CD8-positive, alpha-beta memory T cell (primary cell): ENCODE measurements at regions of chr1 and their contacts with region 1.

Region 1: DNA sequence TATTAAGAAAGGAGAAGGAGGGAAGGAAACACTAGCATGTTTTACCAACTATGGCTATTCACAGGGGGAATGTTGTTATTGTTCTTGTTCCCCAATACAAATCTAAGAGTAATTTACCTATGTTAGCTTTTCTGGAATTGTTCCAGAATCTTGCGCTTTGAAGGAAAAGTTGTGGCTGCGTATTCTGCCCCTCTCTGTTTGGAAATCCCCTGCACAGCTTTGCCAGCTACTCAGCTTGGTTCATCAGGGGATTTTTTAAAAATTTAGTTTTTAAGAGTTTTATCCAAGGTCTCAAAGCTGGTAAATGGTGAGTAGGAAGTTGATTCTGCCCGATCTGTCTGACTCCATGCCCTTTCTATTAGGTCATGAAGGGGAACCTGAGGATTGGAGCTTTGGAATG is 9.5 kb upstream of the IRF6 start:
- DNase-seq: no peak
- H3K4me3 ChIP-seq: no peak overlapping the region
- H3K4me3 Mint-ChIP-seq: no peak overlapping the region
- H3K27ac ChIP-seq: no peak overlapping the region
- H3K27ac Mint-ChIP-seq: no peak overlapping the region
- H3K4me1 ChIP-seq: no peaks in the 10 kb centered on the region
- H3K4me1 Mint-ChIP-seq: no peaks in the 10 kb centered on the region
- H3K27me3 ChIP-seq: no peaks in the 10 kb centered on the region
- H3K27me3 Mint-ChIP-seq: peaks cover 17 to 27% of the 10 kb centered on the region in 2 donors

Region 2: GRCh38 chr1:209827384-209828262 is 12.1 kb after region 1 on chr1 and contains the start of gene UTP25:
- CTCF ChIA-PET with region 1: interaction called, 21 read pairs
- POLR2A ChIA-PET with region 1: no interaction called
- DNase-seq: peak; percentile 83 to 94 (median 91)
- H3K4me3 ChIP-seq: peak within 1 kb of the TSS; percentile 99
- H3K4me3 Mint-ChIP-seq: peak within 1 kb of the TSS; percentile 90 to 97 (median 96)
- H3K27ac ChIP-seq: peak within 1 kb of the TSS; percentile 90
- H3K27ac Mint-ChIP-seq: peak within 1 kb of the TSS; percentile 74 to 98 (median 90)
- H3K4me1 ChIP-seq: peaks cover 29% of the 10 kb centered on the region
- H3K4me1 Mint-ChIP-seq: peaks cover 46 to 50% (median 47%) of the 10 kb centered on the region in 3 donors
- H3K27me3 ChIP-seq: no peaks in the 10 kb centered on the region
- H3K27me3 Mint-ChIP-seq: peaks cover 7 to 11% of the 10 kb centered on the region in 2 donors
- total RNA-seq, gene UTP25: 14.9 to 15.2 TPM